SK-N-SH (cell line): ENCODE measurements at regions of chr19 and their contacts with region 1.

Region 1: GRCh38 chr19:11496391-11497163 is 9.1 kb downstream of the ZNF653 start:
- DNase-seq: peak; percentile 88
- H3K4me3 ChIP-seq: no peak overlapping the region; a peak in 1 of 4 replicates
- H3K27ac ChIP-seq: no peak overlapping the region
- H3K4me1 ChIP-seq: peaks cover 0 to 3% of the 10 kb centered on the region in 2 experiments; a peak in 1 of 4 replicates
- H3K27me3 ChIP-seq: no peaks in the 10 kb centered on the region
- CTCF ChIP-seq: peak; percentile 89
- EP300 ChIP-seq: no peak
- RAD21 ChIP-seq: peak; percentile 59

Region 2: DNA sequence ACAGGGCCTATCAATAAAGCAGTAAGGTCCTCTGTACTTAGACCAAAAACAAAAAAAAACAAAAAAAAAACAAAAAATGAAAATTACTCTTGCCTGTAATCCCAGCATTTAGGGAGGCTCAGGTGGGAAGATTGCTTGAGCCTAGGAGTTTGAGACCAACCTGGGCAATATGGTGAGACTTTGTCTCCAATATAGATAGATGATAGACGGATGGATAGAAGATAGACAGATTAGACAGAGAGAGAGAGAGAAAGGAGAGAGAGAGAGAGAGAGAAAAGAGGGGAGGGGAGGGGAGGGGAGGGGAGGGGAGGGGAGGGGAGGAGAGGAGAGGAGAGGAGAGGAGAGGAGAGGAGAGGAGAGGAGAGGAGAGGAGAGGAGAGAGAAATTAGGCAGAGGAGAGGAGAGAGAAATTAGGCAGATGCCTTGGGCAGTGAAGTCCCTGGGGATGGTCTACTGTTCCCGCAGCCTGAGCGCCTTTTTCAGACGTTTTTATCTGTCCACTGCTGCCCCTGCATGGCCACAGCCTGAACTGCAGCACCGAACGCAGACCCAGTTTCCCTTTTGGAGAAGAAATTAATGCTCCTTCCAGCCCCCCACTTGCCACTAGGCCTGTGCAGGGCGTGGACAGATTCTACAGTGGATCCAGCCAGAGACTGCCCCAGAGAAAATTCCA is 90.9 kb after region 1 on chr19:
- CTCF ChIA-PET with region 1: interaction called, 14 read pairs
- POLR2A ChIA-PET with region 1: no interaction called
- DNase-seq: peak; percentile 85
- H3K4me3 ChIP-seq: peak overlapping the region in 1 of 2 experiments; percentile 57; a peak in 1 of 4 replicates
- H3K27ac ChIP-seq: no peak overlapping the region
- H3K4me1 ChIP-seq: no peaks in the 10 kb centered on the region; a peak in 1 of 4 replicates
- H3K27me3 ChIP-seq: no peaks in the 10 kb centered on the region
- CTCF ChIP-seq: peak; percentile 91
- EP300 ChIP-seq: no peak
- RAD21 ChIP-seq: peak; percentile 90